H1 (cell line): ENCODE measurements at regions of chr3 and their contacts with region 1.

Region 1: DNA sequence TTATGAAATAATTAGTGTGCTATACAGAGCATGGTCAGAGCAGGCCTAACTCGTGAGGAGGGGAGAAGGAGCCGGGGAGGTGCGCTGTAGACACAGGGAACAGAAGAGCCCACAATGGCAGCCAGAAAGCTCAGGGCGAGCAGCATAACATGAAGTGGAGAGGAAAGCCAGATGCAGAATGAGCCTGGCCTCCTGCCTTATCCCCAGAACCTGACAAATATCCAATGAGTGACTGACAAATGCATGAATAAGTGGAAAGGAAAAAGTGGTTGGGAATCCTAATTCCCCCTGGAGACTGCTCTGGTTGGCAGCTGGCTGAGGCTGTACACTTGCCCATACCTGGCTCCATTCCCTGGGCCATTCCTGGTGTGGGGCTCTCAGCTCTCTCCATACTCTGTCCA is 9.2 kb upstream of the MST1R start:
- DNase-seq: no peak
- H3K4me3 ChIP-seq: no peak overlapping the region
- H3K27ac ChIP-seq: no peak overlapping the region
- H3K4me1 ChIP-seq: peaks cover 5 to 27% (median 16%) of the 10 kb centered on the region in 4 experiments
- H3K27me3 ChIP-seq: peaks cover 0 to 18% (median 14%) of the 10 kb centered on the region in 4 experiments; a peak in 5 of 7 replicates
- CTCF ChIP-seq: no peak
- EP300 ChIP-seq: no peak
- POLR2A ChIP-seq: no peak
- RAD21 ChIP-seq: no peak

Region 2: GRCh38 chr3:49856181-49857005 is 56.5 kb before region 1 on chr3 and contains the start of gene TRAIP:
- CTCF ChIA-PET with region 1: interaction called, 10 read pairs
- POLR2A ChIA-PET with region 1: interaction called, 4 read pairs
- DNase-seq: peak; percentile 83 to 99
- H3K4me3 ChIP-seq: peak within 1 kb of the TSS; percentile 79 to 96 (median 84)
- H3K27ac ChIP-seq: peak within 1 kb of the TSS; percentile 13; the same call in 1 of the 2 replicates
- H3K4me1 ChIP-seq: peaks cover 0 to 7% (median 4%) of the 10 kb centered on the region in 4 experiments; a peak in 6 of 7 replicates
- H3K27me3 ChIP-seq: no peaks in the 10 kb centered on the region
- CTCF ChIP-seq: no peak
- EP300 ChIP-seq: no peak
- POLR2A ChIP-seq: peak in 1 of 2 experiments; percentile 91; a peak in 2 of 3 replicates
- RAD21 ChIP-seq: peak; percentile 7 to 10; a peak in 2 of 4 replicates
- total RNA-seq, gene TRAIP: 25.4 and 28.1 TPM in 2 replicates

Region 3: DNA sequence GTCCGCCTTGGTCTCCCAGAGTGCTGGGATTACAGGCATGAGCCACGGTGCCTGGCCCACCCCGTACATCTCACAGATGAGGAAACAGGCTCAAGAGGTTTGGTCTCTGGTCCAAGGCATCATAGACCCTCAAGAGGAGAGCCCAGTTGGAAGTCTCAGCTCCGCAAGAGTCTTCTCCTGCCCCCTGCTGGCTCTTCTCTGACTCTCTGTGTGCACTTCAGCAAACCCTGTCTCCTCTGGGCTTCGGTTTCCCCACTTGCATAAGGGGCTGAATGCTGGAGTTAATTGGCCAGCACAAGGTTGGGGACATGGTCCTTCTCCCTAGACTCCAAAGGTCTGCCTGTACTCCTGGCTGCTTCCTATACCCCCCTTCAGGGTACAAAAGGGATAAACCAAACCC is 13.1 kb before region 1 on chr3:
- CTCF ChIA-PET with region 1: interaction called, 55 read pairs
- POLR2A ChIA-PET with region 1: interaction called, 7 read pairs
- DNase-seq: peak in 1 of 2 experiments; percentile 64
- H3K4me3 ChIP-seq: no peak overlapping the region
- H3K27ac ChIP-seq: no peak overlapping the region
- H3K4me1 ChIP-seq: peaks cover 0 to 9% (median 8%) of the 10 kb centered on the region in 4 experiments; a peak in 6 of 7 replicates
- H3K27me3 ChIP-seq: peaks cover 0 to 3% (median 1%) of the 10 kb centered on the region in 4 experiments; a peak in 3 of 7 replicates
- CTCF ChIP-seq: peak in 2 of 3 experiments; percentile 73; a peak in 3 of 4 replicates
- EP300 ChIP-seq: no peak
- POLR2A ChIP-seq: no peak
- RAD21 ChIP-seq: peak; percentile 74 to 84

Region 4: DNA sequence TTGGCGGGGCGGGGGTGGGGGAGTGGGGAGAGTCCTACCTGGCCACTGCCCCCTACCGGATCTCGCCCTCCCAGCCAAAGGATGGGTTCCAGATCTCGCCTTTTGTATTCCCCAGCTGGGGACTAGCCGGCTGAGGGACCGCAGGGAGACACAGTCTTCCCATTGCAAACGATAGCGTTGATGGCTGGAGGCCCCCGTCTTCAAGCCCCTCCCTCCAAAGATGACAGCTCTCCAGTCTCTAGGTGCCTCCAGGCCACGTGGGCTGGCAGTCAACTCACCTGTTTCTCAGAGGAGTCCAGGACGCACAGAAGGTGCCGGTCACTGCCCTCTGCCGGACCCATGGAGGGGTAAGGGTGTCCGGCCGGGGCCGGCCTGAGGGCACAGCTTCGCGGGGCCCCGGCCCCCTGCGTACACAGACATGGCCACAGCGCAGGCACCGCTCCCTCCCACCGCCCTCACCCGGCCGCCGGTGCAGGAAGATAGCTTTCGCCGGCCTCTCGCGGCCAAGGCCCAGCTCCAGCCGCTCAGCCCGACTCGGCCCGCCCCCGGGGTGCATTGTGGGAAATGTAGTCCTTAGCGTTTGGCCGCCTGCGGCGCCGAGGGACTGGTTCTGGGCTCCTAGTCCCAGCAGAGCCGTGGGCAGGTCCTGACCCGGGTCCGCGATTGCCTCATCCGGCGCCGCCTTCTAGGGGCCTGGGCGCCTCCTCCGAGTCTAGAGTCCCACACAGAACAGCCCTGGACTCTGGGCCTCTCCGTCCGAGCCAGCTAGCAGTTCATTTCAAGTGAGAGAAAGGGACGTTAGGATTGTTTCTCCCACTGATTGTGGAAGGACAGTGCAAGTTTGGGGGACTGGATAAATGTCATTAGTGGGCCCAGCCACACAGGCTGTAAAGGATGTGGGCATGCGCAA is 16.7 kb after region 1 on chr3 and contains the start of gene MON1A:
- CTCF ChIA-PET with region 1: interaction called, 36 read pairs
- POLR2A ChIA-PET with region 1: interaction called, 7 read pairs
- DNase-seq: peak in 1 of 2 experiments; percentile 100
- H3K4me3 ChIP-seq: peak within 1 kb of the TSS; percentile 61 to 87 (median 80)
- H3K27ac ChIP-seq: peak within 1 kb of the TSS; percentile 39; the same call in 1 of the 2 replicates
- H3K4me1 ChIP-seq: peaks cover 2 to 9% (median 5%) of the 10 kb centered on the region in 4 experiments; a peak in 5 of 7 replicates
- H3K27me3 ChIP-seq: no peaks in the 10 kb centered on the region
- CTCF ChIP-seq: peak; percentile 20 to 48 (median 41); a peak in 3 of 4 replicates
- EP300 ChIP-seq: no peak
- POLR2A ChIP-seq: peak in 1 of 2 experiments; percentile 57; a peak in 2 of 3 replicates
- RAD21 ChIP-seq: no peak; a peak in 1 of 4 replicates
- total RNA-seq, gene MON1A: 9.8 and 10.3 TPM in 2 replicates